ENCODE measurements at regions of chr14 and their contacts with region 1.

Region 1: DNA sequence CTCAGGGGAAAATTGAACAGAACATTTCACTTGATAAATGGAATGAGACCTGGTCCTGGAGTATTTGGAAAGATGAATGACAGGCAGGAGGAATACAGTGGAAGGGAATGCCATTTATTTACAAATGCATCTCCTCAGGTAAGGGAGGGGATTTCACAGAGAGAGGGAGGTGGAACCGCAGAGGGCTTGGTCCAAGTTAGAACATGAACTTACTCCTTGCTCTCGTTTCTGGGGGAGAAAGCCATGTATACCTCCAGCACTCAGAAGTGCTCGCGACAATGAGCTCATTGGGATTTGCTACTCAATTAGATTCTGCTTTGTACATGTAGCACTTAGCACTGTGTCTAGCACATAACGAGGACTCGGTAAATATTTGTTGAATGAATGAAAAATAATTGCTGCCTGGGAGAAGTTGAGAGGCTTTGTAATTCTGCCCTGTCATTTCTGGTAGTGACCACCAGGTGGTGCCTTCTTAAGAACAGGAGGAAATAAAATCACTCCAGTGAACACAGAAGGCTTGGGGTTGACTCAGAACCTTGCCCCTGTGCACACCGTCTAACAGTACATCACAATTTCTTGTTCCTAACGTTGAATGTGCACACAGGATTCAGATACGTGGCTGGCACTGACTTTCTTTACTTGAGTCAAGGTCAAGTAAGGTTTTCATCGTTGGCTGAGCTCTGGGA is 91.6 kb downstream of the RGS6 start:
- DNase-seq: no peak

Region 2: DNA sequence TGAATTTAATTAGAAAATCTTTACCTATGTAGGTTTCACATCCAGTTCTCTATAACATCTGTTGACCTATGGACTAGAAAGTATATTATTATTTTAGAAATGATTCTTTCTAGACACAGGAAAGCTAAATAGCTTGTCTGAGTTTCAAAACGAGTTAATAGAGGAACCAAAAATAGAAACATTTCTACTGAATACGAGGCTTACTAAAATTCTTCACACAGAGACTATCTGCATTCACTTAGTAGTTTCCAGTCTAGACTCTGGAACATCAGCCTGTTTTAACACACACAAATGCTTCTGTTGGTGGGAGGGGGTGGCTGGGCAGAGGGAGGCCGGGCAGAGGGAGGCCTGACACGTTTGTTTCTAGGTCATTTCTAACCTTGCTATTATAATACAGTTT is 61.9 kb before region 1 on chr14:
- intact Hi-C with region 1: loop called (anchors 2 kb)
- DNase-seq: no peak

Region 3: GRCh38 chr14:72120315-72120714 is 96.5 kb after region 1 on chr14:
- intact Hi-C with region 1: no loop called
- DNase-seq: no peak

Region 4: DNA sequence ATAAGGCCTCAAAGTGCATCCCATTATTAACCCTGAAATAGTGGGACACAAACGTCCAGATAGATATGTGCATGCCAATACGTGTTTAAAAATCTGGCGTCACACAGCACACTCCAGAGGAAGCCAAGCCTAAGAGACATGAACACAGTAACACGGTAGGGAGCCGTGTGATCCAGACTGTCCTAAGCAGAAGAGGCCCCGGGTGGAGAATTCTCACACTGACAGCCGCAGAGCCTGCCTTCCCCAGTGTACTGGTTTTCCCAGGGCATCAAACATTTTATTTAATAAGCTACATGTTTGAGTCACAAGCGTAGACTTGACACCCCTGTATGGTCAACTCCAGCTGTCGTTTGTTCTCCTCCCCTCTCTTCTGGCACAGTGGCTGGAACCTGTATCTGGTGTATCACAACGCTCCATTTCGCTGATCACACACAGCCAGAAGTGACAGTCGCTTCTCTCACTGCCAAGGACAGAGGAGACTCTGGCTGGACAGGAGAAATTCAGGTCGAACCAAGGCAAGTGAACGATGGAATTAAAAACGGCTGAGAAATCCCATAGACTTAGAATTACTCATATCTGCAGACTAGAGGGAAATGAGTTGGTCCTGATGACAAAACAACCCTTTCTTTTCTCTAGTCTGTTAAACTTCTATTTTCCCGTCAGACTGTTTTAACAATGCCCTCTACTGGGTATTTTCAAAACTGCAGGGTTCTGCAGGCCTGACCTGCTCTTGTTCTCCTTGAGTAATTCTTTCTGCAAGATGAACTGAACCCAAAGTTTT is 268.2 kb after region 1 on chr14:
- intact Hi-C with region 1: loop called (anchors 10 kb)
- DNase-seq: no peak

Region 5: DNA sequence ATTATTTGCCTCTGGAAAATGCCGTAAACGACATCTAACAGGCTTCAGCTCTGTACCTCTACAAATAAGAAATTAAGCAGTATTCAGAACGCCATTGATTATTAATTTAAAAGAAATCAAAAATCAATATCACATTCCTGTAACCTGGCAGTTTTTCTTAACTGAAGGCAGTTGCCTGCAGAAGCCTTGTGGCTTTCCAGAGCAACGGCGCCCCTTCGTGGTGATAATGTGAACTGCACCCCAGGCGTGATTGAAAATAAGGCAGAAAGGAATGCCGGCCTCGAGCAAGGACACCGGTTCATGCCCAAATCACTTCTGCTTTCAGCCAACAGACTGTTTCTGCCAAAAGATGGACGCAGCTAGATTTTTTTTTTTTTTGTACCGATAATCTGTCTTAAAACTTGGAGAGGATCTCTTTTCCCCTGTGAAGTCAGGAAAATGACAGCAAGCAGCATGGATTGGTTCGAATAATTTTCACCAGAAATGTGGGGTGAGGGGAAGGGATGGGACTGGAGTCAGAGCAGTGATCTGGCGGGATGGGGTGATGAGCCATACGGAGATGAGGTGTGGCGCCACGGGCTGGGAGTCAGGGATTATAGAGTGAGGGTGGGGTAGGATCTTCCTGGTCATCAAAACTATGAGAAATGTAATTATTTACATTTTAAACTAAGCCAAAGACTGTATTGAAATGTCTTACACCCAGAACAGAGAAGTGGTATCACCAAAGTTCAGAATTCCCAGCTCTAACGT is 397.0 kb after region 1 on chr14:
- intact Hi-C with region 1: loop called (anchors 5 kb)
- DNase-seq: peak; percentile 83

Measured in cardiac septum (tissue), 1 donor.